Panc1 (cell line): ENCODE measurements at regions of chr2 and their contacts with region 1.

Region 1: GRCh38 chr2:219543601-219544358 is at the starts of genes CHPF and TMEM198:
- DNase-seq: peak; percentile 86
- ATAC-seq: peak; percentile 90
- H3K4me3 ChIP-seq: peak within 1 kb of the TSS; percentile 62 to 70
- H3K27ac ChIP-seq: no peak within 1 kb of the TSS; the same call in 1 of the 2 replicates
- H3K4me1 ChIP-seq: peaks cover 9% of the 10 kb centered on the region; the same call in 1 of the 2 replicates
- H3K27me3 ChIP-seq: no peaks in the 10 kb centered on the region
- CTCF ChIP-seq: no peak
- total RNA-seq, gene CHPF: 17.5 TPM
- total RNA-seq, gene TMEM198: 2.3 TPM

Region 2: DNA sequence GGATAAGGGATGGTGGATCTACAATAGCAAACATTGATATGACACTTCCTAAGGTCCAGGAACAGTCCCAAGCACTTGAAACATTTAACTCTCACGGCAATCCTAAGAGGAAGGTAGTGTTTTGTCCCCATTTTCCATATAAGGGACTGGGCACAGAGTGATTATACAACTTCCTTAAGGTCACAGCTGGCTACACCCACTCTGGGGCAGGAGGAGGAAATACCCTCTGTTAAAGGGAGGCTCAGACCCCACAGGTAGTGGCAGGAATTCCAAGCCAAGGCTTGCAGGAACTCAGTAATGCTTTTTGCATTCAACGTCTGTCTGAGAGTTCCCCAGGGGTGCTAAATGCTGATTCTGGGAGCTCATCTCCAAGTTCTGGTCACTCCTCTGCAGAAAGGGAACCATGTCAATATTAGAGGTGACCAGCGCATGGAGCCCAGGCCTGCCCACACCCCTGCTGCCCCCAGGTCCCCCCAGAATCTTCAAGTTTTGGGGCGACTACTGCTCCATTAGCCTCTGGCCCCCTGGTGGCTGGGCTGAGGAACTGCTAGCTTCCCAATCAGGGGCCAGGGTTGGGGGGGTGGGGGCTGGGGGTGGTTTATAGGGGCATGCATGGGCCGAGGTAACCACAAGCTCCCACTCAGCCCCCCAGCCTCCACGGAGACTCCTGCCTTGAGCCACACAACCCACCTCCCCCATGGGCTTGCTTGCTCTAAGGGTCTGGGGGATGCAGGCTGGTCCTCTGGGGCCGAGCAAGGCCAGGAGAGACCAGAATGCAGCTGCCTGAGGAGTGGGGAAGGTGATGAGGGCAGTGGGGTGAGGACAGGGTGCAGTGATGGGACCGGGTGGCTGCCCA is 16.5 kb after region 1 on chr2:
- CTCF ChIA-PET with region 1: no interaction called
- POLR2A ChIA-PET with region 1: no interaction called
- in situ Hi-C with region 1: no loop called
- intact Hi-C with region 1: no loop called
- DNase-seq: no peak
- ATAC-seq: no peak
- H3K4me3 ChIP-seq: no peak overlapping the region
- H3K27ac ChIP-seq: no peak overlapping the region
- H3K4me1 ChIP-seq: peaks cover 7% of the 10 kb centered on the region
- H3K27me3 ChIP-seq: no peaks in the 10 kb centered on the region
- CTCF ChIP-seq: peak; percentile 96

Region 3: GRCh38 chr2:219627103-219628100 is 83.6 kb after region 1 on chr2 and contains the start of gene SLC4A3:
- CTCF ChIA-PET with region 1: interaction called, 6 read pairs
- POLR2A ChIA-PET with region 1: no interaction called
- in situ Hi-C with region 1: no loop called
- intact Hi-C with region 1: loop called (anchors 5 kb)
- DNase-seq: no peak
- ATAC-seq: peak; percentile 83
- H3K4me3 ChIP-seq: peak within 1 kb of the TSS; percentile 49 to 56
- H3K27ac ChIP-seq: peak within 1 kb of the TSS; percentile 72
- H3K4me1 ChIP-seq: peaks cover 5% of the 10 kb centered on the region
- H3K27me3 ChIP-seq: no peaks in the 10 kb centered on the region
- CTCF ChIP-seq: no peak
- total RNA-seq, gene SLC4A3: 13.5 TPM

Region 4: DNA sequence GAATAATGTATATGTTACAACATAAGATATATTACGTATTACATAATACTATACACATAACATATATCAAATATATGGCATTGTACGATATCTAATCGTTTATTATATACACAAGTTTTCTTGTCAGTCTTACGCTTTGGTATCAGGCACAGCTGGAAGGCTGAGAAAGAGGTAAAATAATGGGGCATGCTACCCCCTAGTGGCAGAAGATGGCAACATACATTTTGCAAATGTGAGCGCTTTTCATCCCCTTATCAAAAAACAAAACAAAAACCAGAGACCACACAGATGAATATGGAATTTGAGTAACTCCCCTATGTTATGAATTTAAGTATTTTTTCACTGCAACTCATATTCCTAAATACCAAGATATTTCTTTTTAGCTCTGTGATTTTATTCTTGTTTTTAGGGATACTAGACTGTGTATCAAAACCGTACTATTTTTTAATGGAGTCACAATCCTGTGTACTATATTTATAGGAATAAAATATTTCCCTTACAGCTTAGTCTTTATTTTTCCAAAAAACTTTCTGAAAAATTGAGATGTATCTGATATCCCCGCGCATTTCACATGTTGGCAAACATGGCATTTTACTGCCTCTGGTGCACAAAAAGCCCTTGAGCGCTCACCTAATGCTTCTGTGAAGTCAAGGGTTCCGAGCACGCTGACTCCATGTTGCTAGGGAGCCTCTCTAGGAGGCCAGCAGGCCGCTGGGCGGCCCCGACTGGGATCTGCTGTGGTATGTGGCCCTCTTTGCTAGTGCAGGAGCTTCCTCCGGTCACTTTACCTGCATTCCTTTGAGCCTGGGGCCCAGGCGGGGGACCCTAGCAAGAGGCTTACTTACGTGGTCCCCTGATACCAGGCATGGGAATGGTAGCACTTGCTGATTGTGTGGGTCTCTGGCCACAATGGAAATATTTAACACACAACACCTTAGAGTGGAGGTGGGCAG is 146.2 kb after region 1 on chr2:
- CTCF ChIA-PET with region 1: interaction called, 4 read pairs
- POLR2A ChIA-PET with region 1: interaction called, 8 read pairs
- in situ Hi-C with region 1: no loop called
- intact Hi-C with region 1: loop called (anchors 2 kb)
- DNase-seq: no peak
- ATAC-seq: peak; percentile 40; the same call in 1 of the 2 replicates
- H3K4me3 ChIP-seq: no peak overlapping the region
- H3K27ac ChIP-seq: no peak overlapping the region
- H3K4me1 ChIP-seq: peaks cover 21% of the 10 kb centered on the region
- H3K27me3 ChIP-seq: no peaks in the 10 kb centered on the region; the same call in none of the 2 replicates
- CTCF ChIP-seq: peak; percentile 78; the same call in 1 of the 2 replicates